CD14-positive monocyte (primary cell): ENCODE measurements at regions of chr1 and their contacts with region 1.

Region 1: GRCh38 chr1:183471743-183472487 is 384 bp upstream of the SMG7 start:
- DNase-seq: peak; percentile 91 to 97 (median 95)
- H3K4me3 ChIP-seq: peak overlapping the region; percentile 90 to 96 (median 95)
- H3K4me3 Mint-ChIP-seq: peak overlapping the region; percentile 97 to 99
- H3K27ac ChIP-seq: peak overlapping the region; percentile 90 to 97
- H3K27ac Mint-ChIP-seq: peak overlapping the region; percentile 99 to 100 (median 100)
- H3K4me1 ChIP-seq: peaks cover 18 to 64% of the 10 kb centered on the region in 2 donors
- H3K4me1 Mint-ChIP-seq: peaks cover 26% of the 10 kb centered on the region
- H3K27me3 ChIP-seq: no peaks in the 10 kb centered on the region
- H3K27me3 Mint-ChIP-seq: peaks cover 0 to 4% (median 2%) of the 10 kb centered on the region in 3 donors
- CTCF ChIP-seq: no peak

Region 2: DNA sequence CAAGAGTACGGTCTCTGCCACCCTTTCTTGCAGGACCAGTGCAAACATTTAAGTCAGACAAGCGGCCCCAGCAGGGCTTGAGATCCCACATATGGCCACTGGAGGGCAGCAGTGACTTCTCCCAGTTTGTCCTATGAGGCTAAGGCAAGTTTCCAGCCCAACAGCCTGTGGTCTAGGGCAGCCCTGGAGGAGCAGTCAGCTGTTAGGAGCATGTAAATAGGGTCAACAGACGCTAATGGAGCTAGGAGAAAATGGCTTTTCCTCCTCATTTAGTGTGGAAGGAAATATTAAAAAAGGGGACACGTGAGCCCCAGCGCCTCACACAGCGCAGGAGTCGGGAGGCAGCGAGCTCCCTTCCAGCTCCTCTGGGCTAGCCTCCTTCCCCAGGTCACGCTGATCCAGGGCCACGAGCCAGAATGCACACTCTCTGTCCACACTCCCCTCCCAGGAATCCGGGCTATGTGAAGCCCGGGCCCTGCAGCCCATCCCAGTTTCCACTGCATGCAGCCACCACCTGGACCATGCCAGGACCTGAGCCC is 190.3 kb before region 1 on chr1:
- intact Hi-C with region 1: no loop called
- DNase-seq: peak; percentile 74 to 81 (median 75)
- H3K4me3 ChIP-seq: no peak overlapping the region
- H3K4me3 Mint-ChIP-seq: no peak overlapping the region
- H3K27ac ChIP-seq: peak overlapping the region in 1 of 2 donors; percentile 96
- H3K27ac Mint-ChIP-seq: peak overlapping the region in 6 of 7 donors; percentile 86 to 99 (median 96)
- H3K4me1 ChIP-seq: peaks cover 38 to 39% of the 10 kb centered on the region in 2 donors
- H3K4me1 Mint-ChIP-seq: peaks cover 38% of the 10 kb centered on the region
- H3K27me3 ChIP-seq: no peaks in the 10 kb centered on the region
- H3K27me3 Mint-ChIP-seq: peaks cover 0 to 3% (median 2%) of the 10 kb centered on the region in 3 donors
- CTCF ChIP-seq: peak; percentile 92

Region 3: GRCh38 chr1:183432548-183432875 is 39.4 kb before region 1 on chr1:
- intact Hi-C with region 1: no loop called
- DNase-seq: no peak
- H3K4me3 ChIP-seq: no peak overlapping the region
- H3K4me3 Mint-ChIP-seq: no peak overlapping the region
- H3K27ac ChIP-seq: no peak overlapping the region
- H3K27ac Mint-ChIP-seq: no peak overlapping the region
- H3K4me1 ChIP-seq: no peaks in the 10 kb centered on the region
- H3K4me1 Mint-ChIP-seq: no peaks in the 10 kb centered on the region
- H3K27me3 ChIP-seq: peaks cover 10% of the 10 kb centered on the region in 2 donors
- H3K27me3 Mint-ChIP-seq: peaks cover 9 to 12% (median 10%) of the 10 kb centered on the region in 3 donors
- CTCF ChIP-seq: no peak

Region 4: GRCh38 chr1:183567584-183567983 is 95.7 kb after region 1 on chr1:
- intact Hi-C with region 1: loop called in 1 of 2 experiments (anchors 10 kb)
- DNase-seq: peak; percentile 70 to 85 (median 74)
- H3K4me3 ChIP-seq: peak overlapping the region in 1 of 3 experiments; percentile 10
- H3K4me3 Mint-ChIP-seq: peak overlapping the region; percentile 54
- H3K27ac ChIP-seq: peak overlapping the region; percentile 76 to 80
- H3K27ac Mint-ChIP-seq: peak overlapping the region; percentile 91 to 98 (median 98)
- H3K4me1 ChIP-seq: peaks cover 44 to 48% of the 10 kb centered on the region in 2 donors
- H3K4me1 Mint-ChIP-seq: peaks cover 44% of the 10 kb centered on the region
- H3K27me3 ChIP-seq: no peaks in the 10 kb centered on the region
- H3K27me3 Mint-ChIP-seq: no peaks in the 10 kb centered on the region
- CTCF ChIP-seq: no peak

Region 5: DNA sequence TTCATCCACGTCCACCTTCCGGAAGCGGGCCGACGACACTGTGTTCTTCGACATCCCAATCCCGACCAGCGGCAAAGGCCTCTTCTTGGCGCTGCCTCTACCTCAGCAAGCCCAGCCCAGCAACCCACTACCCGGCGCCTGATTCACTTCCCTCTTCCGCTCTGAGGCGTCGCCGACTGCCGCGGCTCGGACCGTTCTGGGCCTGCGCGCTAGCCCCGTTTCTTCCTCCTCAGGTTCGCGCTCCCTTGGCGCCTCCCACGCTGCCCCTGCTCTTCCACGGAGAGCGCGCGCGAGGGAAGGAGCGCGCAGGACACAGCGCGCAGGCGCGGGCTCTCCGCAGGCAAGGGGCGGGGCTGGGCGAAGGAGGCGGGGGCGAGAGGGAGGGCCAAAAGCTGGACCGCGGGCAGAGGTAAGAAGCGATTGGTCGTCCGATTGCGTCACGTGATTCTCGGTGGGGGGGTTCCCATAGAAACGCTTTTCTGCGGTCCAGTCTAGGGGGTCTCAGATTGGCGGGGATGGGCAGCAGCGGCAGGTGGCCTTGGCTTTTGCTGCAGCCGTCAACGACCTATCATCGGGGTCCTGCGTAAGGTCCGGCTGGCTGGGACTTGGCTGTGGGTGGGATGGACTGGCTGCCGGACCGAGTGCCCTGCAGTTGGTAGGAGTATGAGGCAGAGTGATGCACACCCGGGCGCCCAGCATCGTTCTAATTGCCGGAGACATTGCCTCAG is 163.9 kb after region 1 on chr1 and contains the start of gene ARPC5:
- intact Hi-C with region 1: loop called (anchors 5 kb)
- DNase-seq: peak; percentile 98 to 99 (median 98)
- H3K4me3 ChIP-seq: peak within 1 kb of the TSS; percentile 88 to 98 (median 95)
- H3K4me3 Mint-ChIP-seq: peak within 1 kb of the TSS; percentile 100
- H3K27ac ChIP-seq: peak within 1 kb of the TSS; percentile 91 to 97
- H3K27ac Mint-ChIP-seq: peak within 1 kb of the TSS; percentile 97 to 100 (median 100)
- H3K4me1 ChIP-seq: peaks cover 26 to 48% of the 10 kb centered on the region in 2 donors
- H3K4me1 Mint-ChIP-seq: peaks cover 35% of the 10 kb centered on the region
- H3K27me3 ChIP-seq: no peaks in the 10 kb centered on the region
- H3K27me3 Mint-ChIP-seq: peaks cover 3 to 7% (median 5%) of the 10 kb centered on the region in 3 donors
- CTCF ChIP-seq: no peak
- polyA plus RNA-seq, gene ARPC5: 110 to 1,089 (median 1,064) TPM

Region 6: GRCh38 chr1:184754476-184755225 is 1282.7 kb after region 1 on chr1 and contains the start of gene EDEM3:
- intact Hi-C with region 1: loop called in 1 of 2 experiments (anchors 10 kb)
- DNase-seq: peak; percentile 99
- H3K4me3 ChIP-seq: peak within 1 kb of the TSS; percentile 88 to 100 (median 97)
- H3K4me3 Mint-ChIP-seq: peak within 1 kb of the TSS; percentile 91 to 97
- H3K27ac ChIP-seq: peak within 1 kb of the TSS; percentile 88 to 91
- H3K27ac Mint-ChIP-seq: peak within 1 kb of the TSS; percentile 89 to 97 (median 95)
- H3K4me1 ChIP-seq: peaks cover 17 to 44% of the 10 kb centered on the region in 2 donors
- H3K4me1 Mint-ChIP-seq: peaks cover 32% of the 10 kb centered on the region
- H3K27me3 ChIP-seq: no peaks in the 10 kb centered on the region
- H3K27me3 Mint-ChIP-seq: peaks cover 0 to 2% (median 0%) of the 10 kb centered on the region in 3 donors
- CTCF ChIP-seq: no peak
- polyA plus RNA-seq, gene EDEM3: 15.5 to 21.9 (median 18.0) TPM